ENCODE measurements at regions of chr3 and their contacts with region 1.

Region 1: GRCh38 chr3:159884661-159885402 is 103.8 kb upstream of the IL12A start:
- DNase-seq: no peak
- ATAC-seq: no peak
- H3K4me3 ChIP-seq: no peak overlapping the region
- H3K27ac ChIP-seq: peak overlapping the region; percentile 91
- H3K4me1 ChIP-seq: peaks cover 59% of the 10 kb centered on the region
- H3K27me3 ChIP-seq: no peaks in the 10 kb centered on the region
- CTCF ChIP-seq: peak; percentile 44

Region 2: DNA sequence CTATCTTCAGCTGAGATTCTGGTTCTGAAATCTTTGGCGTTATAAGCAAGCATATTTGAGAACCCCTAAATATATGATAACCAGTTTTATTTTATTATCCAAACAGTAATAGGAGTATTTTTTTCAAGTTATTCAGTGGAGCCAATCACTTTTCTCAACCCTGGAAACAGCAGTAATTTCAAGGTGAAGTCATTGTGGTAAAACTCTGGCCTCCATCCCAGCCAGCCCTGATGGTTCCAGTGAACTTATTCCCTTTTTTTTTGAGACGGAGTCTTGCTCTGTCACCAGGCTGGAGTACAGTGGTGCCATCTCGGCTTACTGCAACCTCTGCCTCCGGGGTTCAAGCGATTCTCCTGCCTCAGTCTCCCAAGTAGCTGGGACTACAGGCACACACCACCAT is 441.6 kb before region 1 on chr3:
- intact Hi-C with region 1: no loop called
- DNase-seq: no peak
- ATAC-seq: no peak
- H3K4me3 ChIP-seq: no peak overlapping the region
- H3K27ac ChIP-seq: no peak overlapping the region
- H3K4me1 ChIP-seq: no peaks in the 10 kb centered on the region
- H3K27me3 ChIP-seq: no peaks in the 10 kb centered on the region
- CTCF ChIP-seq: no peak

Region 3: GRCh38 chr3:159854500-159855124 is 30.2 kb before region 1 on chr3:
- intact Hi-C with region 1: loop called in 1 of 2 experiments (anchors 2 kb)
- DNase-seq: peak; percentile 24 to 78
- ATAC-seq: peak; percentile 64 to 77 (median 74)
- H3K4me3 ChIP-seq: peak overlapping the region; percentile 73
- H3K27ac ChIP-seq: peak overlapping the region; percentile 95
- H3K4me1 ChIP-seq: peaks cover 56% of the 10 kb centered on the region
- H3K27me3 ChIP-seq: no peaks in the 10 kb centered on the region
- CTCF ChIP-seq: no peak

Measured in psoas muscle (tissue), 8 donors.